CD4-positive, alpha-beta T cell (primary cell): ENCODE measurements at regions of chr5 and their contacts with region 1.

Region 1: DNA sequence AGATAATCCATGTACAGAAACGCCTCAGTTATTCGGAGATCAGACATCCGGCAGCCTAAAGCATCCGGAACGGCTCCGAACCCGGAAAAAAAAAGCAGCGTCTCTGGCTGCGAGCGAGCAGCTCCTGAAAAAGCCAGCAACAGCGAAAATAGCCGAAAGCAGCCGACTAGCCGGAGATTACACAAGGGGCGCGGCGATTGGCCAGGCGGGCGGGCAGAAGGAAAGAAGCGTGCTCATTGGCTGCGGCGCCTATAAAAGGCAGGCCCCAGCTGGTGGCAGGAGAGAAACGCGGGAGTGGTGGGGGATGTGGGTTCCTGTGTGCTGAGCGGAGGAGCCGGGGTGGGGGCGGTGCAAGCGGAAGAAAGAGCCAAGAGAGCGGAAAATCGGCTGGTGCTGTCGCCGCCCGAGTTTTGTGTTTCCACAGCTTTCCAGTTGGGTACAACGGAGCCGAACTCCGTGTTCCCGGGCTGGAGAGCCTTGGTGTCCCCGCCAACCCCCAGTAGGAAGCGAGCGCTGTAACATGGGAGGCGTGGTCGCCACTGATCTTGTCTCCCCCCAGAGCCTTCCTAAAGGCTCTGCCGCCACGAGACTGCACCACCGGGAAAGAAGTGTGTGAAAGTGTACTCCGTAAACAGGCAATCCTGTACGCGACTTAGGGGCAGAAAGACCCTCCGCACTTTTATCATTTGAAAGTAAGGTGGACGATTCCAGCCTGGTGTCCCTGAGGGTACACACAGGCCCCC is at the start of gene ARL15:
- DNase-seq: peak; percentile 97 to 99 (median 98)
- ATAC-seq: peak; percentile 93
- H3K4me3 ChIP-seq: peak within 1 kb of the TSS; percentile 86
- H3K4me3 Mint-ChIP-seq: peak within 1 kb of the TSS; percentile 99
- H3K27ac ChIP-seq: peak within 1 kb of the TSS; percentile 53 to 59
- H3K27ac Mint-ChIP-seq: peak within 1 kb of the TSS; percentile 94
- H3K4me1 ChIP-seq: peaks cover 11% of the 10 kb centered on the region
- H3K4me1 Mint-ChIP-seq: peaks cover 35% of the 10 kb centered on the region
- H3K27me3 ChIP-seq: no peaks in the 10 kb centered on the region
- H3K27me3 Mint-ChIP-seq: peaks cover 23% of the 10 kb centered on the region
- CTCF ChIP-seq: no peak
- total RNA-seq, gene ARL15: 9.1 to 10.6 TPM

Region 2: DNA sequence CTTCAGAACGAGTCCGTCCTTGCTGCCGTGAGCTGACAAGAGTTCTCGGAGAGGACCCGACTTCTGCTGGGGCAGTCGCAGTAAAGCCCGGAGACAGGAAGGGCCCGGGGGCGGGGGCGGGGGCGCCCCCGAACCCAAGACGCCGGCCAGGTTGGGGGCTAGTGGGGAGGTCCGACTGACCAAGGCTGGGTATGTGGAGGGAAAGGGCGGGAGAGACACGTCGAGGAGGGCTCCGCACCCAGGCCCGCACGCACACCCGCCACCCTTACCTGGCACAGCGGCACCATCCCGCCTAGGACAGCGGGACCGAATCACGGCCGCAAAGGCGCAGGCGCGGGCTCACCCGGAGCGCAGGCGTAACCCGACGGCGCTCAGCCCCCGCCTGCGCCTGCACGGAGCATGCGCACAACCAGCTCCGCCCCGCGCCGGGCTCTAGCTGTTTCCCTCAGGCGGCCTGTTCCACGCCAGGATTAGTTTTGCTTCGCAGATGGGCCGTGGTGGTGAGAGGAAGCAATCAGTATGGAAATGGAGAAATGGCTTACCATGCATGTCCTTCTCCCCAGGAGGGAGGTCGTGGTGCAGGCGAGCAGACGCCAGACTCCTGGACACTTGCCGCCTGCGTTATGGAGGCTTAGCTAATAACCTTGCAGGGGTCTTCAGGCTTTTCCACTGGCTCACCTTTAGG is 1201.0 kb before region 1 on chr5 and contains the start of gene MOCS2:
- CTCF ChIA-PET with region 1: interaction called, 3 read pairs
- POLR2A ChIA-PET with region 1: interaction called, 5 read pairs
- intact Hi-C with region 1: loop called in 1 of 2 experiments (anchors 5 kb)
- DNase-seq: peak; percentile 79 to 96 (median 88)
- ATAC-seq: peak; percentile 96
- H3K4me3 ChIP-seq: peak within 1 kb of the TSS; percentile 88
- H3K4me3 Mint-ChIP-seq: peak within 1 kb of the TSS; percentile 94
- H3K27ac ChIP-seq: peak within 1 kb of the TSS; percentile 64 to 77
- H3K27ac Mint-ChIP-seq: peak within 1 kb of the TSS; percentile 89
- H3K4me1 ChIP-seq: peaks cover 10% of the 10 kb centered on the region
- H3K4me1 Mint-ChIP-seq: peaks cover 58% of the 10 kb centered on the region
- H3K27me3 ChIP-seq: no peaks in the 10 kb centered on the region
- H3K27me3 Mint-ChIP-seq: no peaks in the 10 kb centered on the region
- CTCF ChIP-seq: no peak
- total RNA-seq, gene MOCS2: 19.5 to 20.4 TPM

Region 3: GRCh38 chr5:54249210-54250028 is 61.2 kb before region 1 on chr5:
- CTCF ChIA-PET with region 1: no interaction called
- POLR2A ChIA-PET with region 1: interaction called, 4 read pairs
- intact Hi-C with region 1: loop called in 1 of 2 experiments (anchors 5 kb)
- DNase-seq: peak in 13 of 14 experiments; percentile 5 to 49 (median 14)
- ATAC-seq: no peak
- H3K4me3 ChIP-seq: no peak overlapping the region
- H3K4me3 Mint-ChIP-seq: no peak overlapping the region
- H3K27ac ChIP-seq: no peak overlapping the region
- H3K27ac Mint-ChIP-seq: no peak overlapping the region
- H3K4me1 ChIP-seq: no peaks in the 10 kb centered on the region
- H3K4me1 Mint-ChIP-seq: peaks cover 30% of the 10 kb centered on the region
- H3K27me3 ChIP-seq: no peaks in the 10 kb centered on the region
- H3K27me3 Mint-ChIP-seq: no peaks in the 10 kb centered on the region
- CTCF ChIP-seq: no peak

Region 4: DNA sequence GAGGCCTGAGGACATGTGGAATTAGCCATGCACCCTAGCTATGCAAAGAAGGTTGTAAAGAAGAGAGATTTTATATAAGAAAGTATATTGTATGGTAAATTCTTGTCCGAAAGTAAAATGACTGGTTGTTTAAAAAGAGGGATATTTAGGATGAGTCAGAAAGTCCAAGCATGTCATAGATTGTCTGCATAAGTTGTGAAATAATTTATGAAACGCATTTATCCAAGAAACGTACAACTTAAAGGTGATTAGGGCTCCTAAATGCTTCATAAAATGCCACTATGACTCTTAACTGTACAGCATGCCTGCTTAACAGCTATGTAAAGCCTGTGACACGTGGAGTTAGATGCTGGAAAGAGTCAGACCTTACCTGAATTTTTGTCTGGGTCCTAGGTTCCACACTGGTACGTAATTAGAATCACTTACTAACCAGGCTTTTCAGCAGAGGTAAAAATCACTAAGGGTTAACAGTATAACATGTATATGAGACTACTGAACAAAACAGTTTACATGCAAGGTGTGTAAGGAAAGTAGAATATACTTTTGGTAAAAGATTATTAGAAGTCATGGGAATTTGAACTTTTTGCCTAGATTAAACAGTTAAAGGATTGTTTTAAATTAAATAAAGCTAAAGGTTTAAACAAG is 36.7 kb after region 1 on chr5:
- CTCF ChIA-PET with region 1: no interaction called
- POLR2A ChIA-PET with region 1: no interaction called
- intact Hi-C with region 1: no loop called
- DNase-seq: no peak
- ATAC-seq: no peak
- H3K4me3 ChIP-seq: no peak overlapping the region
- H3K4me3 Mint-ChIP-seq: no peak overlapping the region
- H3K27ac ChIP-seq: no peak overlapping the region
- H3K27ac Mint-ChIP-seq: no peak overlapping the region
- H3K4me1 ChIP-seq: no peaks in the 10 kb centered on the region
- H3K4me1 Mint-ChIP-seq: no peaks in the 10 kb centered on the region
- H3K27me3 ChIP-seq: no peaks in the 10 kb centered on the region
- H3K27me3 Mint-ChIP-seq: no peaks in the 10 kb centered on the region
- CTCF ChIP-seq: no peak

Region 5: GRCh38 chr5:54492178-54492577 is 181.6 kb after region 1 on chr5:
- CTCF ChIA-PET with region 1: no interaction called
- POLR2A ChIA-PET with region 1: no interaction called
- intact Hi-C with region 1: loop called in 1 of 2 experiments (anchors 2 kb)
- DNase-seq: no peak
- ATAC-seq: no peak
- H3K4me3 ChIP-seq: no peak overlapping the region
- H3K4me3 Mint-ChIP-seq: no peak overlapping the region
- H3K27ac ChIP-seq: no peak overlapping the region
- H3K27ac Mint-ChIP-seq: no peak overlapping the region
- H3K4me1 ChIP-seq: no peaks in the 10 kb centered on the region
- H3K4me1 Mint-ChIP-seq: no peaks in the 10 kb centered on the region
- H3K27me3 ChIP-seq: no peaks in the 10 kb centered on the region
- H3K27me3 Mint-ChIP-seq: peaks cover 14% of the 10 kb centered on the region
- CTCF ChIP-seq: no peak

Region 6: GRCh38 chr5:54743997-54744788 is 433.6 kb after region 1 on chr5:
- CTCF ChIA-PET with region 1: no interaction called
- POLR2A ChIA-PET with region 1: no interaction called
- intact Hi-C with region 1: loop called in 1 of 2 experiments (anchors 10 kb)
- DNase-seq: peak in 13 of 14 experiments; percentile 13 to 89 (median 39)
- ATAC-seq: peak; percentile 95
- H3K4me3 ChIP-seq: no peak overlapping the region
- H3K4me3 Mint-ChIP-seq: peak overlapping the region; percentile 16
- H3K27ac ChIP-seq: peak overlapping the region in 1 of 2 donors; percentile 18
- H3K27ac Mint-ChIP-seq: peak overlapping the region; percentile 67
- H3K4me1 ChIP-seq: peaks cover 30% of the 10 kb centered on the region
- H3K4me1 Mint-ChIP-seq: peaks cover 19% of the 10 kb centered on the region
- H3K27me3 ChIP-seq: no peaks in the 10 kb centered on the region
- H3K27me3 Mint-ChIP-seq: no peaks in the 10 kb centered on the region
- CTCF ChIP-seq: no peak

Region 7: DNA sequence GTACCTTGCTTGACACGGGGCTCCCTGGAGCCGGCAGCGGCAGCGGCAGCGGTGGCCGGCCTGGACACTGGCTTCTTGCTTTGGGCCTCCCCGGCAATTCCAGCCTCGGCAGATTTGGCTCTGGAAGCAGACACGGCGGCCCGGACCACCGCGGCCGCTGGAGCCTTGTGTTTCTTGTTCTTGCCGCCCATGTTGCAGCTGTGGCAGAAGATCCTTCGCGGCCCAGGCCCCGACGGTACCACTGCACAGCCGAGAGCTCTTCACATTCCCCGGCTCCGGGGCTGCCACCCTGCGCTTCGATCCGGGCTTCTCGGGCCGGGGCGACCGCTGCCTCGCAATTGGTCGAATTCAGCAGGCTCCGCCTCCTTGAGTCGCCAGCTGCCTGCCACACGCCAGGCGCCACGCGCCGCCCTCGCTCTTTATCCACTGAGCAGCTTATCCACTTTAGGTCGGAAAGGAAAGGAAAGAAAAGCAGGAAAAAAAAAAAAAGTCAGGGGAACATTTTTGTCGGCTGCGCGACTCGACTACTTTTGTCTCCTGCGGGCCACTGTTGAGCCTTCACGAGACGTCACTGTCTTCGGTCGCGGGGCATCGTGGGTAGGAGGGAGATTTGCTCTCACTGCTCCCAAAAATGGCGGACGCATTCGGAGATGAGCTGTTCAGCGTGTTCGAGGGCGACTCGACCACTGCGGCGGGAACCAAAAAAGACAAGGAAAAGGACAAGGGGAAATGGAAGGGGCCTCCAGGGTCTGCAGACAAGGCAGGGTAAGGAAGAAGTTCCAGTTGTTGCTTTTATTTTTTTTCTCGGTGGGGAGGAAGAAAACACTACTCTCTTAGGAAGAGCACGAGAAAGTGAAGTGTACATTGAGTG is 997.0 kb after region 1 on chr5 and contains the starts of genes DHX29 and MTREX:
- CTCF ChIA-PET with region 1: no interaction called
- POLR2A ChIA-PET with region 1: no interaction called
- intact Hi-C with region 1: loop called in 1 of 2 experiments (anchors 5 kb)
- DNase-seq: peak; percentile 79 to 93 (median 83)
- ATAC-seq: peak; percentile 90
- H3K4me3 ChIP-seq: peak within 1 kb of the TSS; percentile 94
- H3K4me3 Mint-ChIP-seq: no peak within 1 kb of the TSS
- H3K27ac ChIP-seq: peak within 1 kb of the TSS; percentile 88 to 90
- H3K27ac Mint-ChIP-seq: no peak within 1 kb of the TSS
- H3K4me1 ChIP-seq: peaks cover 29% of the 10 kb centered on the region
- H3K4me1 Mint-ChIP-seq: peaks cover 35% of the 10 kb centered on the region
- H3K27me3 ChIP-seq: no peaks in the 10 kb centered on the region
- H3K27me3 Mint-ChIP-seq: no peaks in the 10 kb centered on the region
- CTCF ChIP-seq: no peak
- total RNA-seq, gene DHX29: 13.8 to 17.9 TPM
- total RNA-seq, gene MTREX: 50.9 to 54.5 TPM